ENCODE measurements at regions of chr5 and their contacts with region 1.

Region 1: DNA sequence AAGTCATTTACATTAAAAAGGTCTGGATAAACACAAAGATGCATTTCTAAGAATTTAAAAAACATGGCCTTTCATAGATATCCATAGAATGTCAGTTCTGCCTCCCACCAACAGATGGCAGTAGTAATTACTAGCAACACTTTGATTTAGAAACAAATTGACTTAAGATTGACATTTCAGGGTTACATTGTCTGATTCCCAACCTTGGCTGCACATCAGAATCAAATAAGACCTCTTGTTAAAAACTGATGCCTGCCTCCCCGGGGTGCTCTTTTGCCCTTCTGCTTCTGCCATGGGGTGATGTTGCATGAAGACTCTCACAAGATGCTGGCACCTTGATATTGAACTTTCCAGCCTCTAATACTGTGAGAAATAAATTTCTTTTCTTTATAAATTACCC is 146.2 kb upstream of the GPR151 start:
- DNase-seq: no peak
- H3K4me3 Mint-ChIP-seq: no peak overlapping the region
- H3K27ac Mint-ChIP-seq: no peak overlapping the region
- H3K4me1 Mint-ChIP-seq: peaks cover 4% of the 10 kb centered on the region
- H3K27me3 Mint-ChIP-seq: no peaks in the 10 kb centered on the region

Region 2: DNA sequence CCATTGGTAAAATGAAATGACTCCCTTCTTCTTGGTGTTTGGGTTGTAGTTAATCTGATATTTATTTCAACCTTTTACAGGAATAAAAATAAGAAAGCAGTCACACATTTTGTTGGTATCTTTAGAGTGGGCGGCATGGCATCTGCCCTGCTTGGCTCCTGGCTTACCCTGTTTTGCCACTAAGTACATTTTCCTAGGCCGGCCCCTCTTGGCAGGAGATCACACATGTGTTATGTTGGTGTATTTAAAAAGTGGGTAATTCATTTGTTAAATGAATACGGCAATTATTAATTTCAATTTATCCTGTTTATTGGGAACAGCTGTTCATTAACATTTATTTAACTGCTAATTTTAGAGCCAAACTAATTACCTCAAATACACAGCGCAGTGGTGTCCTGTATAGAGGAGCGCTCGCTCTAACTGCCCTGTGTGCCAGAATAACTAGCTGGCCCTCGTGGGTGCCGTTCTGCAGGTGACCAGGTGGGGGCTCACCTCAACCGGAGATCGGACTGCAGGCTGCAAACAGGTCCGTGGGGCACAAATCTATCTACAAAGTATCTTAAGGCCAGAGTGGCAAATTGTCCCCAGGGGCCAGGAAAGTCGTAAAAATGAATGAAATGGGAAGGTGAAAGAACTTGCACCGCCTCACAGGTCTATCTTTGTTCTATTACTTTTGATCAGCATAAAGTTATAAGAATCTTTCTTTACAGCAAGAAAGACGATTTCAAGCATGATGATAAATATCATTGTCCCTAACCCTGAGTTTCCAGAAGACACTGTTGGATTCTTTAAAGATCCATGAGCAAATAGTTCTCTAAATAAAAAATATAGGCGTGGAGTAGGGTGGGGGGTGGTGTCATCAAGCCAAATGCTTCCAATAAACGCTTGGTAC is 120.0 kb before region 1 on chr5:
- CTCF ChIA-PET with region 1: interaction called, 9 read pairs
- POLR2A ChIA-PET with region 1: no interaction called
- intact Hi-C with region 1: loop called (anchors 5 kb)
- DNase-seq: peak; percentile 79
- H3K4me3 Mint-ChIP-seq: no peak overlapping the region
- H3K27ac Mint-ChIP-seq: no peak overlapping the region
- H3K4me1 Mint-ChIP-seq: peaks cover 2% of the 10 kb centered on the region
- H3K27me3 Mint-ChIP-seq: no peaks in the 10 kb centered on the region